ENCODE measurements at regions of chr6 and their contacts with region 1.

Region 1: GRCh38 chr6:30914076-30914853 is at the start of gene VARS2:
- DNase-seq: peak; percentile 93
- H3K4me3 ChIP-seq: peak within 1 kb of the TSS; percentile 74
- H3K27ac ChIP-seq: peak within 1 kb of the TSS; percentile 72
- H3K4me1 ChIP-seq: peaks cover 2% of the 10 kb centered on the region; the same call in 1 of the 2 replicates
- H3K27me3 ChIP-seq: no peaks in the 10 kb centered on the region
- total RNA-seq, gene VARS2: 11.9 and 20.8 TPM in 2 replicates

Region 2: GRCh38 chr6:31079656-31080261 is 165.5 kb after region 1 on chr6:
- in situ Hi-C with region 1: loop called (anchors 10 kb)
- DNase-seq: peak; percentile 83
- H3K4me3 ChIP-seq: peak overlapping the region; percentile 25; the same call in 1 of the 2 replicates
- H3K27ac ChIP-seq: no peak overlapping the region
- H3K4me1 ChIP-seq: peaks cover 9% of the 10 kb centered on the region
- H3K27me3 ChIP-seq: no peaks in the 10 kb centered on the region